A549 (cell line): ENCODE measurements at regions of chr5 and their contacts with region 1.

Region 1: DNA sequence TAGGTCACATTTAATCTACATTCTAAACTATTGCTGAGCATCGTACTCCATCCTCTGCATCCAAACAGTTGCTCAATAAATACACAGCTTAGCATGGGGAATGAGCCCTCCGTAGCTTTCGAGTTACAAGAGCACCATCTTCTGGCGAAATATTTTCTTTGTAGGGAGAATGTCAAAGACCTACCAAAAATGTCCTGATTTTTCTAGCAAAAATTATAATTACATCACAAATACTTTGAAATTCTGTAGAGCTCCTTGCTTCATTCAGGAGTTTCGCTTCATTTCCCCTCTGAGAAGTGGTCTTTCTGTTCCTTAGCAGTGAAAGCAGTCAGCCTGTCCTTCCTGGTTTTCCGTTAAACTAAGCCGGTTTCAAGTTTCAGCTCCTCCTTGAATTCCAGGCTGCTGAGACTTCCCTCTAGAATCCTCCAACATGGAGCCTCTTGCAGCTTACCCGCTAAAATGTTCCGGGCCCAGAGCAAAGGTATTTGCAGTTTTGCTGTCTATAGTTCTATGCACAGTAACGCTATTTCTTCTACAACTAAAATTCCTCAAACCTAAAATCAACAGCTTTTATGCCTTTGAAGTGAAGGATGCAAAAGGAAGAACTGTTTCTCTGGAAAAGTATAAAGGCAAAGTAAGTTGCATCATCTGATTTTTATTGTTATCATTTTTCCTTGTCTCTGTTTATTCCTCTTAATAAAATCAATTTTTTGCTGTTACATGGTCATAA is at the start of gene GPX8:
- DNase-seq: peak; percentile 76 to 88
- ATAC-seq: peak; percentile 95 to 97
- H3K4me3 ChIP-seq: peak within 1 kb of the TSS; percentile 54
- H3K27ac ChIP-seq: peak within 1 kb of the TSS; percentile 85 to 87
- H3K4me1 ChIP-seq: peaks cover 7% of the 10 kb centered on the region; the same call in 2 of the 3 replicates
- CTCF ChIP-seq: peak; percentile 97
- EP300 ChIP-seq: no peak
- POLR2A ChIP-seq: peak; percentile 27
- RAD21 ChIP-seq: peak; percentile 92 to 93
- polyA plus RNA-seq, gene GPX8: 67.9 and 86.0 TPM in 2 replicates

Region 2: GRCh38 chr5:54905943-54906537 is 253.9 kb before region 1 on chr5:
- CTCF ChIA-PET with region 1: interaction called, 56 read pairs
- POLR2A ChIA-PET with region 1: interaction called, 9 read pairs
- DNase-seq: peak; percentile 42 to 56
- ATAC-seq: peak in 1 of 2 experiments; percentile 73; a peak in 3 of 6 replicates
- H3K4me3 ChIP-seq: no peak overlapping the region
- H3K27ac ChIP-seq: no peak overlapping the region
- H3K4me1 ChIP-seq: no peaks in the 10 kb centered on the region
- CTCF ChIP-seq: peak; percentile 70
- EP300 ChIP-seq: no peak
- POLR2A ChIP-seq: no peak
- RAD21 ChIP-seq: peak; percentile 74 to 79

Region 3: GRCh38 chr5:54944364-54944763 is 215.6 kb before region 1 on chr5:
- CTCF ChIA-PET with region 1: interaction called, 12 read pairs
- POLR2A ChIA-PET with region 1: interaction called, 7 read pairs
- DNase-seq: peak; percentile 19 to 22
- ATAC-seq: peak; percentile 54 to 75; a peak in 3 of 6 replicates
- H3K4me3 ChIP-seq: no peak overlapping the region
- H3K27ac ChIP-seq: no peak overlapping the region
- H3K4me1 ChIP-seq: no peaks in the 10 kb centered on the region
- CTCF ChIP-seq: peak; percentile 65
- EP300 ChIP-seq: no peak
- POLR2A ChIP-seq: no peak
- RAD21 ChIP-seq: peak; percentile 40 to 41; a peak in 4 of 5 replicates

Region 4: DNA sequence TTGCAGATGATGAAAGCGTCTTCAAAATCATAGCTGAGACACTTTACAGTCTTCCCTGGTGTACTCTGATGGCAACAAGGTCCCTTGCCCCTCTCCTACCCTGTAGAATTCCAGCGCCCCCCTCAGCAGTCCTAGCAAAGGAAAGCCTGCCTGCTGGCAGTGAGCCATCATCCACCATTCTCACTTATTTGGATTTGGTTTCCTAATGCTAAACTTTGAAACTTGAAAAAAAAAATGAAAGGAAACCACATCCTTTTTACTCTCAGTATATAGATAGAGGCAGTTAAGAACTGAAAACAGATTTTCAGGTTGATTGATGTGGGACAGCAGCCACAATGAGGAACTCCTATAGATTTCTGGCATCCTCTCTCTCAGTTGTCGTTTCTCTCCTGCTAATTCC is 57.6 kb before region 1 on chr5 and contains the start of gene GZMA:
- CTCF ChIA-PET with region 1: no interaction called
- POLR2A ChIA-PET with region 1: no interaction called
- DNase-seq: no peak
- ATAC-seq: no peak
- H3K4me3 ChIP-seq: no peak within 1 kb of the TSS
- H3K27ac ChIP-seq: no peak within 1 kb of the TSS
- H3K4me1 ChIP-seq: no peaks in the 10 kb centered on the region
- CTCF ChIP-seq: no peak
- EP300 ChIP-seq: no peak
- POLR2A ChIP-seq: no peak
- RAD21 ChIP-seq: no peak
- polyA plus RNA-seq, gene GZMA: not detected in 2 replicates

Region 5: DNA sequence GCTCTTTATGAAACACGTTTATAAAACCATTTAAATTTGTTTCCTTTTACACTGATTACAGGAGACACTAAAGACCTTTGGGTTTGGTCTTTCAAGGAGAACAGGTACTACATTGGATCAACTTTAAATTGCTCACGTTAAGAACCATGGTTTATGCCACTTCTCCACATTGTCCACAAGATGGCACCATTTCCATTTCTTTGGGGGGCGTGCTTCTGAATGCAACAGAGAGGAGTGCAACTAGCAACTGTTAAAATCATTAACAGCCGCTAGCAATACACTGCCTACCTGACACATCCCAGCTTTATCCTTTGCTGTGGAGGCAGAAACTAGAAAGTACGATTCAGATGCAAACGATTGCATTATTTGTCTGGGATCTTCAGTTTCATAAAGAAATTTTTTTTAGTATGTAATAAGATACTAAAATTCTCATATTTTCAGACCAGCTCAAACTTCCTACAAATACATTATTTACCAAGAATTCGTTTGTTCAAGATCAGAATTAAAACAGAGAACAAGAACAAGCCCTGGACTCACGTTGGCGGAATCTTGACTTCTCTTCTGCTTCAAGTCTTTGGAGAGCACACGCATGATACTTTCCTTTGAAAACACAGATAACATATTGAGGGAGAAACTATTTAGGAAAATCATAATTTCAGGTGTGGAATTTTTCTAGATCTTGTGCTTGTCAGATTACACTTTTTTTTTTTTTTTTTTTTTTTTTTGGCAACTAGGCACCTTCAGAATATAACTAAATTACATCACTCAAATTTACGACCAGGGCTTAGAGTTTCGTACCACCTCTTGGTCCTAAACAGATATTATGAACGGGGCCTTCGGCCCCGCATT is 12.3 kb after region 1 on chr5:
- CTCF ChIA-PET with region 1: interaction called, 17 read pairs
- POLR2A ChIA-PET with region 1: interaction called, 3 read pairs
- DNase-seq: peak; percentile 79 to 87
- ATAC-seq: peak; percentile 58 to 75
- H3K4me3 ChIP-seq: peak overlapping the region; percentile 54
- H3K27ac ChIP-seq: no peak overlapping the region
- H3K4me1 ChIP-seq: peaks cover 23% of the 10 kb centered on the region
- CTCF ChIP-seq: peak; percentile 93
- EP300 ChIP-seq: no peak
- POLR2A ChIP-seq: no peak
- RAD21 ChIP-seq: peak; percentile 92 to 94